ENCODE measurements at regions of chr11 and their contacts with region 1.

Region 1: GRCh38 chr11:8911029-8911826 is at the start of gene AKIP1:
- DNase-seq: peak; percentile 97
- ATAC-seq: peak; percentile 97
- total RNA-seq, gene AKIP1: 26.8 TPM

Region 2: GRCh38 chr11:8682303-8683114 is 228.7 kb before region 1 on chr11 and contains the starts of genes RPL27A and TRIM66:
- intact Hi-C with region 1: loop called (anchors 5 kb)
- DNase-seq: peak; percentile 99
- ATAC-seq: peak; percentile 99
- total RNA-seq, gene RPL27A: 549 TPM
- total RNA-seq, gene TRIM66: 2.4 TPM

Region 3: DNA sequence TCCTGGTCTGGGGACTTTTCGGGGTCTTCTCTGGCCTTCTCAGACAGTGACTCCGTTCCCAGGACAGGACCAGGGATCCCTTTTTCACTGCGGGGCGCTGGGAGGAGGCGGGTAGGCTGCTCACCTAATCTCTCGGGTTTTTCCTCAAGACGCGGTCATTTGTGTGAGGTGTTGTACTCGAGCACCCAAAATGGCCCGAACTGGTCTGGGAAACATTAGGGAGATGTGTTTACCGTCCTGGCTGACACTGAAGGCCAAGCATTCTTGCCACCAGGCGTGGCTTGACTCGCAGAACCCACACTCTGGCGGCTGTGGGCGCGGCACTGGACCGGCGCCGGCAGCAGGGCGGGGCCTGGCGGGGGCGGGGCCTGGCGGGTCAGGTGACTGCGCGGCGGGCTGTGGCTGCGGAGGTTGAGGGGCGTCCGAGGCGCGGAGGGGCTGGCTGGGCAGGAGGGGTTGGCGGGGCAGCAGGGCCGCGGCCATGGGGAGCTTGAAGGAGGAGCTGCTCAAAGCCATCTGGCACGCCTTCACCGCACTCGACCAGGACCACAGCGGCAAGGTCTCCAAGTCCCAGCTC is 752.6 kb after region 1 on chr11 and contains the start of gene SWAP70:
- intact Hi-C with region 1: no loop called
- DNase-seq: peak; percentile 94
- ATAC-seq: peak; percentile 99
- total RNA-seq, gene SWAP70: 19.0 TPM